Calu3 (cell line): ENCODE measurements at regions of chrX and their contacts with region 1.

Region 1: GRCh38 chrX:150365051-150365989 is 2.2 kb downstream of the MAMLD1 start:
- DNase-seq: peak; percentile 84
- H3K4me3 Mint-ChIP-seq: peak overlapping the region; percentile 84
- H3K27ac Mint-ChIP-seq: peak overlapping the region; percentile 90
- H3K4me1 Mint-ChIP-seq: peaks cover 38% of the 10 kb centered on the region
- H3K27me3 Mint-ChIP-seq: peaks cover 21% of the 10 kb centered on the region
- CTCF ChIP-seq: peak; percentile 57

Region 2: DNA sequence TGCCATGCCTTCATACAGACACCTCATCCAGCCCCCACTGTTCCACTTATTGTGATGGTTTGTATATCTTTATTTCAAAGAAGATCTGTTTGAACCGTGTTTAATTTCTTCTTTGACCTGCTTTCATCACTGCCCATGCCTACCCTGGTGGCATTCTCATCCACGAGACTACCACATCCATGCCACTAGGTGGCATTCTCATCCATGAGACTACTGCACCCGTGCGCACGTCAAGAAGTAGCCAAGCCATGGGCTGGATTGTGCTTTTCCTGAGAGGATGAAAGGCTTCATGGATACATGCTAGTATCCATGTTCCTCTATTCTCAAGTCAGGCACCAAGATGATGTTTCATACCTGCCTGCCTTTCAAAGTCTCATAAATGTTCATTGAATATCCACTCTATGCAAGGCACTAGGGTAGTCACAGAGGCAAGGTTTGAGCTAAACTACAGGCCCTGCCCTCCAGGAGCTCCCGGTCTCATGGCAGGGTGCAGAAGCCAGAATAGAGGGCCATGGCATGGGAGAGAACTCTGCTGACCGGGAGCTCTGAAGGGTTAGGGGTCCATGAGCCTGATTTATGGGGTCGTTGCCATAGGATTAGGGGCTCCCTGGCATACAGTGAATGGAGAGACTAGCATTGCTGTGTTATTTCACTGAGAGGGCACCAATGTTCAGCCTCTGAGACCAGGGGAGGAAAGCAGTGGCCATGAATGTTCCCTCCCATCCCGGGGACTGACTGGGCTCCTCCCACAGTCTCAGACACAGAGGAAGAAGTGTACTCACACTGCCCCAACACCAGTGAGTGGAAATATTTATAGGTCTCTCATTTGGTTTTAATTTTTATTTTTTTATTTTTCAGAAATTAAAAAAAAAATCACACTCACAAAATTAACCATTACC is 402.2 kb before region 1 on chrX:
- CTCF ChIA-PET with region 1: no interaction called
- intact Hi-C with region 1: loop called (anchors 2 kb)
- DNase-seq: peak; percentile 55
- H3K4me3 Mint-ChIP-seq: no peak overlapping the region
- H3K27ac Mint-ChIP-seq: peak overlapping the region; percentile 40
- H3K4me1 Mint-ChIP-seq: peaks cover 9% of the 10 kb centered on the region
- H3K27me3 Mint-ChIP-seq: no peaks in the 10 kb centered on the region
- CTCF ChIP-seq: peak; percentile 74

Region 3: GRCh38 chrX:150119323-150119722 is 246.0 kb before region 1 on chrX:
- CTCF ChIA-PET with region 1: no interaction called
- intact Hi-C with region 1: no loop called
- DNase-seq: no peak
- H3K4me3 Mint-ChIP-seq: no peak overlapping the region
- H3K27ac Mint-ChIP-seq: no peak overlapping the region
- H3K4me1 Mint-ChIP-seq: no peaks in the 10 kb centered on the region
- H3K27me3 Mint-ChIP-seq: peaks cover 14% of the 10 kb centered on the region
- CTCF ChIP-seq: no peak

Region 4: GRCh38 chrX:150200820-150201287 is 164.5 kb before region 1 on chrX:
- CTCF ChIA-PET with region 1: no interaction called
- intact Hi-C with region 1: loop called (anchors 10 kb)
- DNase-seq: peak; percentile 73
- H3K4me3 Mint-ChIP-seq: no peak overlapping the region
- H3K27ac Mint-ChIP-seq: peak overlapping the region; percentile 56
- H3K4me1 Mint-ChIP-seq: peaks cover 13% of the 10 kb centered on the region
- H3K27me3 Mint-ChIP-seq: no peaks in the 10 kb centered on the region
- CTCF ChIP-seq: no peak

Region 5: DNA sequence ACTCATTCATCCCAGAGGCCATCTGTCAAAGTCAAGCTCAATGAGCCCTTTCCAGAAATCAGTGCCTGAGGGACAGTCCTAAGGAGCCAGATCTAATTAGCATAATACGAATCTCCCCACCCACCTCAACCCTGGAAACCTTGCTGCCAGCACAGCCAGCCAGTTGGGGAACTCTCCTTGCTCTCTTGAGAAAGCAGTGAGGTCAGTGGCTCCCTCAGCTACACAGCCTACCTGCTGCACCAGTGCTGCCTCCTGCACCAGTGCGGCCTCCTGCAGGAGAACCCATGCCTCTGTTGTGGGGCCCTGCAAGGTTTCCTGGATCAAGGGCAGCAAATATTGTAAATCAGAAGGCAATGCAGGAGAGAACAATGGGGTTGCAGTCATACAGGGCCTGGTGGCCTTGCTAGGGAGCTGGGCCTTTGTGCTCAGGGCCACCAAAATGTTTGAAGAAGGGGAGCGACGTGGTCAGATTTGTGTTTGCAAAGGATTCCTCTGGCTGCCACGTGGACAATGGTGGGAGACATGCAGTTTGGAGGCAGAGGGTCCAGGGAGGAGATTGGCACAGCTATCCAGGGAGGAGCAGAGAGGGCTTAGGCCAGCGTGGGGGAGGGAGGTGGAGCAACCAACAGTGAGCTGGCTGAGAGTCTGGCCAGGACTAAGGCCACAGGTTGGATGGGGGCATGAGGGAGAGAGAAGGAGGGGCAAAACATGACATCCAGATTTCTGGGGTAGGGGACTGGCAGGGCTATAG is 126.5 kb before region 1 on chrX:
- CTCF ChIA-PET with region 1: no interaction called
- intact Hi-C with region 1: no loop called
- DNase-seq: no peak
- H3K4me3 Mint-ChIP-seq: no peak overlapping the region
- H3K27ac Mint-ChIP-seq: no peak overlapping the region
- H3K4me1 Mint-ChIP-seq: no peaks in the 10 kb centered on the region
- H3K27me3 Mint-ChIP-seq: no peaks in the 10 kb centered on the region
- CTCF ChIP-seq: no peak

Region 6: DNA sequence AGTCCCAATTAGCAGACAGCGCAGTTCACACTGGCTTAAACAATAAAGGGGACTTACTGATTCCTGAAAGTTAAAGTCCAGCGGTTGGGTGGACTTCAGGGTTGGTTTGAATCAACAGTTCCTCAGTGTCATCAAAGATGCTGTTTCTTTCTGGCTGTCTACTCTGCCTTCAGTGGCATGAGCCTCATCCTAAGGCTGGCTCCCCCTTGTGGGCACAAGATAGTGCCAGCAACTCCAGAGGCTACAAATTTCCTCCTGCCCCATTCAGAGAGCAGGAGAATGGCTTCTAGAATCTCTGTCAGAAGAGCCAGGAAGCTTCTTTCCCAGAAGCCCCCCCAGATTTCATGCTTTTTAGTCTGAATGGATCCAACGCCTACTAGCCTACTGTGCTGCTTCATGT is 120.7 kb after region 1 on chrX:
- CTCF ChIA-PET with region 1: interaction called, 3 read pairs
- intact Hi-C with region 1: loop called (anchors 2 kb)
- DNase-seq: peak; percentile 64
- H3K4me3 Mint-ChIP-seq: no peak overlapping the region
- H3K27ac Mint-ChIP-seq: no peak overlapping the region
- H3K4me1 Mint-ChIP-seq: peaks cover 13% of the 10 kb centered on the region
- H3K27me3 Mint-ChIP-seq: no peaks in the 10 kb centered on the region
- CTCF ChIP-seq: peak; percentile 50

Region 7: DNA sequence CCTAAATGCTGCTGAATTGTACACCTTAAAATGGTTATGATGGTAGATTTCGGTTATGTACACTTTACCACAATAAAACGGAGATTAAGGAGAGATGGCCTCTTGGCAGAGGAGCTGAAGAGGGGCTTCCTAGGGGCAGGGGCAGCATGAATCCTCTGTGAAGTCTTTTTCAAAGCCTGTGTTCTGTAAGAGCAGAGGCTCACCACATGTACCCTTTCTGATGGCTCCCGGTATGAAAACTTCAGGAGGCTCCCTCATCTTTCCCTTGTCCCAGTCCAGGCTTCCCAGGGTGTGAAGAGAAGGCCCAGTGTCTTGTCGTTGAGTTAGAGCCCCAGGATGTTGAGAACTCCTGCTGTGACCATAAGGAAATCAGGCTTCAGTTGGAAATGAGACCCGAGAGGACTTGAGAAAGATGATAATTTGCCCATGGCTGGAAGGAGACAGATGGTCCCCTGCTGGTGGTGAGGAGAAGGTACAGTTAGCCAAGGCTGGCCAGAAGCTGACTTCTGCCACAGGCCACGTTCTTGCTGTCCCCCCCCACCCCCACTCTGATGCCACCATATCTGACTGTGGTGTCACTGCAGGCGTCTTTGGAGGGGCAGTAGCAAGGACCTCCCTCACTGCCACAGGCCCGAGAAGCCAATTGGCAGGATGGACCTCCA is 171.3 kb after region 1 on chrX:
- CTCF ChIA-PET with region 1: no interaction called
- intact Hi-C with region 1: no loop called
- DNase-seq: no peak
- H3K4me3 Mint-ChIP-seq: no peak overlapping the region
- H3K27ac Mint-ChIP-seq: no peak overlapping the region
- H3K4me1 Mint-ChIP-seq: no peaks in the 10 kb centered on the region
- H3K27me3 Mint-ChIP-seq: peaks cover 20% of the 10 kb centered on the region
- CTCF ChIP-seq: peak; percentile 19

Region 8: GRCh38 chrX:150587585-150588503 is 222.5 kb after region 1 on chrX:
- CTCF ChIA-PET with region 1: no interaction called
- intact Hi-C with region 1: loop called (anchors 5 kb)
- DNase-seq: peak; percentile 35
- H3K4me3 Mint-ChIP-seq: no peak overlapping the region
- H3K27ac Mint-ChIP-seq: no peak overlapping the region
- H3K4me1 Mint-ChIP-seq: no peaks in the 10 kb centered on the region
- H3K27me3 Mint-ChIP-seq: no peaks in the 10 kb centered on the region
- CTCF ChIP-seq: peak; percentile 30